ENCODE measurements at regions of chr11 and their contacts with region 1.

Region 1: GRCh38 chr11:10857709-10858438 is at the start of gene ZBED5:
- DNase-seq: peak; percentile 90 to 98 (median 94)
- ATAC-seq: peak; percentile 89
- H3K4me3 ChIP-seq: peak within 1 kb of the TSS; percentile 87
- H3K4me3 Mint-ChIP-seq: peak within 1 kb of the TSS; percentile 100
- H3K27ac ChIP-seq: peak within 1 kb of the TSS; percentile 92 to 96
- H3K27ac Mint-ChIP-seq: peak within 1 kb of the TSS; percentile 99
- H3K4me1 ChIP-seq: peaks cover 18% of the 10 kb centered on the region
- H3K4me1 Mint-ChIP-seq: peaks cover 66% of the 10 kb centered on the region
- H3K27me3 ChIP-seq: no peaks in the 10 kb centered on the region
- H3K27me3 Mint-ChIP-seq: no peaks in the 10 kb centered on the region
- CTCF ChIP-seq: no peak
- total RNA-seq, gene ZBED5: 71.1 to 72.0 TPM

Region 2: DNA sequence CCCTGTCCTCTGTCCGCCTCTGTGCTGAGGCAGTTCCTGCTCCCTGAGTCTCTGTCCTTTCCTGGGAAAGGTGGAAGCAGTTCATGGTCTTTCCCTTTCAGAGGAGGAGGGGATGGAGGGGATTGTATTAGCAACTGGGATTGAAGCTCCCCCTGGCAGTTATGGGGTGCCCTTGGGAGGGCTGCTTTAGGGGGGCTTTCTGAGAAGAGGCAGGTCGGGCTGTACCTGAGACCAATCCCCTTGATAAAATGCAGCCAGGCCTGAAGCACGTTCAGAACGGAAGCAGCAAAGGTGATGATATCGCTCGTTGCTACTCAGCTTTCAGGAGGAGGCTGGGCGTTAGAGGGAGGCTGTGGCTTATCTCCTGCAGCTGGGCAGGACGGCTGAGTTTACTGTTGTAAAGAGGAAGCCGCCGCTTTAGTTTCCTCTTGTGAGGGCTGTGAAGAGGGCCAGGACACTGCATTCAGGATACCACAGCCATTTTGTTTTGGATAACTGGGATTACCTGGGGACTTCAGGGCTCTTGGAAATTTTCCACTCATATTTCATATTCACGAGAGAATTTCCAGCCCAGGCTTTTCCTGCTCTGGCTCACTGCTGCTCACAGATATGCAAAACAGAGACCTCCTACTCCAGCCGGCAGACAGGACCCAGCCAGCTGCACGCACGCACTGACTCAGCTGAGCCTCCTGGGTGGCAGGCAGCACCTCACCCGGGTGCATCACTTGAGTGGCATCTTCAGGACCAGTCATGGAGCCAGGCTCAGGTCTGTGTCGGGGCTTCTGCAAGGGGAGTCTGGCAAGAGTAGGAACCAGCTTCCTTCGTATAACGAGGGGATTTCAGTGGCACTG is 402.0 kb before region 1 on chr11:
- CTCF ChIA-PET with region 1: no interaction called
- POLR2A ChIA-PET with region 1: interaction called, 7 read pairs
- intact Hi-C with region 1: loop called in 1 of 2 experiments (anchors 10 kb)
- DNase-seq: peak; percentile 50 to 87 (median 75)
- ATAC-seq: peak; percentile 71
- H3K4me3 ChIP-seq: peak overlapping the region; percentile 66
- H3K4me3 Mint-ChIP-seq: peak overlapping the region; percentile 93
- H3K27ac ChIP-seq: peak overlapping the region; percentile 63 to 89
- H3K27ac Mint-ChIP-seq: peak overlapping the region; percentile 95
- H3K4me1 ChIP-seq: peaks cover 77% of the 10 kb centered on the region
- H3K4me1 Mint-ChIP-seq: peaks cover 78% of the 10 kb centered on the region
- H3K27me3 ChIP-seq: no peaks in the 10 kb centered on the region
- H3K27me3 Mint-ChIP-seq: no peaks in the 10 kb centered on the region
- CTCF ChIP-seq: no peak

Region 3: DNA sequence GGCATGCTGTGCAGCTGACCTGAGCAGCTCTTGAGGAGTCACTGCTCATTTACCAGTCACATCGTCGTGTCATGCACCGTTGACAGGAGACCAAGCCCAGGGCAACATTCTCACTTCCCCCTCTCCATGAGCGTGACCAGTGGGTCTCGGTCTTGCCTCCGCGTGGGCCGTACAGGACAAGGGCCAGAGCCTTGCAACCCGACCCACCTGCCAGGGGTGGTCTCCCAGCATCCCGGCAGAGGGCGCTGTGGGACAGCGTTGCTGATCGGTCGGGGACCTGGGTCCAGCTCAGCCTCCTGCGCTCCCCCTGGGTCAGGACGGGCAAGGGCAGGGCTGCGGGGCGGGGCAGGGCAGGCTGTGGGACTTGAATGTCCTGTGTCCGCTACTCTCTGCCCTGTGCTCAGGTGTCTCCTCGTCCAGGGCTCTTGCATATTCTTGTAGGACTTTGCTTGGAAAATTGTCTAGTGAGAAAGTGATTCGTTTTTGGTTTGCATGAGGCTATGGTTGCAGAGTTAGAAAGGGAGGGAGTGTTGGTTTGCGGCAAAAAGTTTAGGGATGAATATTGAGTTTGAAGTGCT is 65.4 kb before region 1 on chr11:
- CTCF ChIA-PET with region 1: interaction called, 6 read pairs
- POLR2A ChIA-PET with region 1: interaction called, 13 read pairs
- intact Hi-C with region 1: no loop called
- DNase-seq: peak; percentile 72 to 90 (median 80)
- ATAC-seq: peak; percentile 85
- H3K4me3 ChIP-seq: no peak overlapping the region
- H3K4me3 Mint-ChIP-seq: no peak overlapping the region
- H3K27ac ChIP-seq: no peak overlapping the region
- H3K27ac Mint-ChIP-seq: no peak overlapping the region
- H3K4me1 ChIP-seq: peaks cover 19% of the 10 kb centered on the region
- H3K4me1 Mint-ChIP-seq: peaks cover 32% of the 10 kb centered on the region
- H3K27me3 ChIP-seq: no peaks in the 10 kb centered on the region
- H3K27me3 Mint-ChIP-seq: no peaks in the 10 kb centered on the region
- CTCF ChIP-seq: peak; percentile 95

Region 4: GRCh38 chr11:10803676-10804075 is 54.2 kb before region 1 on chr11:
- CTCF ChIA-PET with region 1: interaction called, 18 read pairs
- POLR2A ChIA-PET with region 1: interaction called, 478 read pairs
- intact Hi-C with region 1: no loop called
- DNase-seq: no peak
- ATAC-seq: no peak
- H3K4me3 ChIP-seq: no peak overlapping the region
- H3K4me3 Mint-ChIP-seq: peak overlapping the region; percentile 11
- H3K27ac ChIP-seq: no peak overlapping the region
- H3K27ac Mint-ChIP-seq: peak overlapping the region; percentile 100
- H3K4me1 ChIP-seq: peaks cover 54% of the 10 kb centered on the region
- H3K4me1 Mint-ChIP-seq: peaks cover 87% of the 10 kb centered on the region
- H3K27me3 ChIP-seq: no peaks in the 10 kb centered on the region
- H3K27me3 Mint-ChIP-seq: no peaks in the 10 kb centered on the region
- CTCF ChIP-seq: no peak

Region 5: GRCh38 chr11:10844356-10844755 is 13.5 kb before region 1 on chr11:
- CTCF ChIA-PET with region 1: no interaction called
- POLR2A ChIA-PET with region 1: interaction called, 55 read pairs
- intact Hi-C with region 1: no loop called
- DNase-seq: no peak
- ATAC-seq: no peak
- H3K4me3 ChIP-seq: no peak overlapping the region
- H3K4me3 Mint-ChIP-seq: no peak overlapping the region
- H3K27ac ChIP-seq: no peak overlapping the region
- H3K27ac Mint-ChIP-seq: no peak overlapping the region
- H3K4me1 ChIP-seq: no peaks in the 10 kb centered on the region
- H3K4me1 Mint-ChIP-seq: peaks cover 11% of the 10 kb centered on the region
- H3K27me3 ChIP-seq: no peaks in the 10 kb centered on the region
- H3K27me3 Mint-ChIP-seq: no peaks in the 10 kb centered on the region
- CTCF ChIP-seq: no peak

Region 6: GRCh38 chr11:10899121-10899830 is 41.4 kb after region 1 on chr11:
- CTCF ChIA-PET with region 1: no interaction called
- POLR2A ChIA-PET with region 1: interaction called, 10 read pairs
- intact Hi-C with region 1: loop called in 1 of 2 experiments (anchors 1 kb)
- DNase-seq: peak in 3 of 14 experiments; percentile 8 to 38 (median 31)
- ATAC-seq: no peak
- H3K4me3 ChIP-seq: no peak overlapping the region
- H3K4me3 Mint-ChIP-seq: no peak overlapping the region
- H3K27ac ChIP-seq: no peak overlapping the region
- H3K27ac Mint-ChIP-seq: peak overlapping the region; percentile 22
- H3K4me1 ChIP-seq: peaks cover 10% of the 10 kb centered on the region
- H3K4me1 Mint-ChIP-seq: peaks cover 6% of the 10 kb centered on the region
- H3K27me3 ChIP-seq: no peaks in the 10 kb centered on the region
- H3K27me3 Mint-ChIP-seq: no peaks in the 10 kb centered on the region
- CTCF ChIP-seq: no peak

Region 7: GRCh38 chr11:11841723-11842420 is 984.0 kb after region 1 on chr11 and contains the start of gene USP47:
- CTCF ChIA-PET with region 1: no interaction called
- POLR2A ChIA-PET with region 1: interaction called, 11 read pairs
- intact Hi-C with region 1: no loop called
- DNase-seq: peak; percentile 92 to 97 (median 94)
- ATAC-seq: peak; percentile 69
- H3K4me3 ChIP-seq: peak within 1 kb of the TSS; percentile 87
- H3K4me3 Mint-ChIP-seq: no peak within 1 kb of the TSS
- H3K27ac ChIP-seq: peak within 1 kb of the TSS; percentile 91 to 99
- H3K27ac Mint-ChIP-seq: no peak within 1 kb of the TSS
- H3K4me1 ChIP-seq: peaks cover 19% of the 10 kb centered on the region
- H3K4me1 Mint-ChIP-seq: peaks cover 3% of the 10 kb centered on the region
- H3K27me3 ChIP-seq: peaks cover 0 to 5% of the 10 kb centered on the region in 2 experiments
- H3K27me3 Mint-ChIP-seq: peaks cover 16% of the 10 kb centered on the region
- CTCF ChIP-seq: peak; percentile 62
- total RNA-seq, gene USP47: 97.0 to 100 TPM